Naive thymus-derived CD4-positive, alpha-beta T cell (primary cell): ENCODE measurements at regions of chr10 and their contacts with region 1.

Region 1: DNA sequence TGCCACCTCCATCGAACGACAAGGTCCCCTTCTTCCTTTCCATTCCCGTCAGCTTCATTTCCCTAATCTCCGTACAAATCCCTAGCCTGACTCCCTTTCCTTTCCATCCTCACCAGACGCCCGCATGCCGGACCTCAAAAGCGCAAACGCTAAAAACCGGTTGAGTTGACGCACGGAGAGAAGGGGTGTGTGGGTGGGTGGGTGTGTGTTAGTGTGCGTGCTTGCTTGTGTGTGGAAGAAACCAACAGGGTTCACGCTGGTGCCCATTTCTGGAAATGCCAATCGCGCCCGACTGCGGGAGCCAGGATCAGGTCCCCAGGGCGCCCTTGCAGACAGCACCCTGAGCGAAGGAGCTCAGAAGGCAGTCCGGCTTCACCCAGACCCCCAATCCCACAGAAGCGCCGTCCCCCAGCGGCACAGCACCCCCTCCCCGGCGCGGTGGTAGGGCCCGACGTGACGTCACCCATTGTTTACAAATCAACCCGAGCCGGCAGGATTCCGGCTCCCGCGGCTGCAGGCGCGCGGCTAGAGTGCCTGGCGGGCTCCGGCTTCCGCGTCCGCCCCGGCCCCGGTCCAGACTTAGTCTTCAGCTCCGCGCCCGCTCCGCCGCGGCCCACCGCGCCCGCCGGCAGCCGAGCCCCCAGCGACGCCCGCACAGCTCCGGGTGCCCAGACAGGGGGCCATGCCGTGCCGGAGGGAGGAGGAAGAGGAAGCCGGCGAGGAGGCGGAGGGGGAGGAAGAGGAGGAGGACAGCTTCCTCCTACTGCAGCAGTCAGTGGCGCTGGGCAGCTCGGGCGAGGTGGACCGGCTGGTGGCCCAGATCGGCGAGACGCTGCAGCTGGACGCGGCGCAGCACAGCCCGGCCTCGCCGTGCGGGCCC is at the start of gene FRAT1:
- DNase-seq: peak; percentile 87 to 99 (median 95)
- ATAC-seq: peak; percentile 87
- H3K4me3 ChIP-seq: peak within 1 kb of the TSS; percentile 92
- H3K4me3 Mint-ChIP-seq: peak within 1 kb of the TSS; percentile 92 to 99 (median 94)
- H3K27ac ChIP-seq: peak within 1 kb of the TSS; percentile 100
- H3K27ac Mint-ChIP-seq: peak within 1 kb of the TSS; percentile 99 to 100 (median 99)
- H3K4me1 ChIP-seq: peaks cover 12 to 18% of the 10 kb centered on the region in 2 donors
- H3K4me1 Mint-ChIP-seq: peaks cover 20 to 40% (median 29%) of the 10 kb centered on the region in 7 donors
- H3K27me3 ChIP-seq: no peaks in the 10 kb centered on the region
- H3K27me3 Mint-ChIP-seq: peaks cover 0 to 20% (median 0%) of the 10 kb centered on the region in 5 donors
- total RNA-seq, gene FRAT1: 5.3 to 41.0 (median 21.8) TPM

Region 2: GRCh38 chr10:96513698-96514561 is 805.1 kb before region 1 on chr10 and contains the start of gene TLL2:
- CTCF ChIA-PET with region 1: no interaction called
- POLR2A ChIA-PET with region 1: no interaction called
- intact Hi-C with region 1: no loop called
- DNase-seq: peak; percentile 1 to 74 (median 33)
- ATAC-seq: peak; percentile 83
- H3K4me3 ChIP-seq: peak within 1 kb of the TSS; percentile 48
- H3K4me3 Mint-ChIP-seq: peak within 1 kb of the TSS; percentile 75 to 86 (median 80)
- H3K27ac ChIP-seq: no peak within 1 kb of the TSS
- H3K27ac Mint-ChIP-seq: peak within 1 kb of the TSS in 1 of 9 donors; percentile 37
- H3K4me1 ChIP-seq: peaks cover 0 to 9% of the 10 kb centered on the region in 2 donors
- H3K4me1 Mint-ChIP-seq: peaks cover 8 to 24% (median 18%) of the 10 kb centered on the region in 7 donors
- H3K27me3 ChIP-seq: peaks cover 0 to 6% of the 10 kb centered on the region in 2 donors
- H3K27me3 Mint-ChIP-seq: peaks cover 29 to 61% (median 36%) of the 10 kb centered on the region in 5 donors
- total RNA-seq, gene TLL2: 0.24 TPM in 1 of 5 experiments, not detected in the others

Region 3: GRCh38 chr10:96740579-96741281 is 578.3 kb before region 1 on chr10:
- CTCF ChIA-PET with region 1: no interaction called
- POLR2A ChIA-PET with region 1: no interaction called
- intact Hi-C with region 1: no loop called
- DNase-seq: no peak
- ATAC-seq: peak; percentile 87
- H3K4me3 ChIP-seq: no peak overlapping the region
- H3K4me3 Mint-ChIP-seq: peak overlapping the region in 1 of 10 donors; percentile 29
- H3K27ac ChIP-seq: no peak overlapping the region
- H3K27ac Mint-ChIP-seq: no peak overlapping the region
- H3K4me1 ChIP-seq: no peaks in the 10 kb centered on the region
- H3K4me1 Mint-ChIP-seq: peaks cover 0 to 9% (median 0%) of the 10 kb centered on the region in 7 donors
- H3K27me3 ChIP-seq: no peaks in the 10 kb centered on the region
- H3K27me3 Mint-ChIP-seq: peaks cover 0 to 11% (median 0%) of the 10 kb centered on the region in 5 donors

Region 4: DNA sequence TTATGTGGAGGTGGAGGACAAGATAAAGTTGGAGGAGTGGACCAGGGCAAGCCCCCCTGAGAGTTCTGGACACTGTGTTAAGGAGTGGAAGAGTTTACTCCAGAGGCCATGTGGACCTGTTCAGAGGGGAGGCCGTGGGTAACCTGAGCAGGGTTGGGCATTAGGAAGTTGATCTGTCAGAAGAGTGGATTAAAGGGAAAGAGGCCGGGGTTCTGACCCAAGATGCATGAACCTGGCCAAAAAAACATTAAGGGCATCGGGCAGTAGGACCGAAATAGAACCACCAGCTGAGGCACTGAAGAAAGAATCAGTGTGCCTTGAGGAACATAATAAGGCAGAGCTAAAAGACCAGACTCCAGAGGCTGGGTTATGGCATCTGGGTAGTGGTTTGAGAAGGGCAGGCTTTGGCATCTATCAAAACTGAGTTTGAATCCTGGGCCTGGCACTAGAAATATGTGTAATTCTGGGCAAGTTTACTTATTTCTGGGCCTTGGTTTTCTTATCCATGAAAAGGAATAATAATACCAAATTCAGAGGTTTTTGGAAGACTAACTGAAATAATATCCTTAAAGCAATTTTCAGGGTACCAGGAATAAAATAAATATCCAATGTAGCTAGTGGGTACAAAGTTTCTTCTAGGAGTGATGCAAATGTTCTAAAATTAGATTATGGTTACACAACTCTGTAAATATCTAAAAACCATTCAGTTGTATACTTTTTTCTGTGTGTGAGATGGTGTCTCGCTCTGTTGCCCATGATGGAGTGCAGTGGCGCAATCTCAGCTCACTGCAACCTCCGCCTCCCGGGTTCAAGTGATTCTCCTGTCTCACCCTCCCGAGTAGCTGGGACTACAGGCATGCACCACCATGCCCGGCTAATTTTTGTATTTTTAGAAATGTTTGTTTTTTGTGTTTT is 10.9 kb before region 1 on chr10:
- CTCF ChIA-PET with region 1: no interaction called
- POLR2A ChIA-PET with region 1: interaction called, 12 read pairs
- intact Hi-C with region 1: no loop called
- DNase-seq: no peak
- ATAC-seq: no peak
- H3K4me3 ChIP-seq: no peak overlapping the region
- H3K4me3 Mint-ChIP-seq: no peak overlapping the region
- H3K27ac ChIP-seq: no peak overlapping the region
- H3K27ac Mint-ChIP-seq: peak overlapping the region in 1 of 9 donors; percentile 17
- H3K4me1 ChIP-seq: no peaks in the 10 kb centered on the region
- H3K4me1 Mint-ChIP-seq: no peaks in the 10 kb centered on the region
- H3K27me3 ChIP-seq: no peaks in the 10 kb centered on the region
- H3K27me3 Mint-ChIP-seq: no peaks in the 10 kb centered on the region

Region 5: GRCh38 chr10:97334370-97335175 is 15.6 kb after region 1 on chr10 and contains the start of gene FRAT2:
- CTCF ChIA-PET with region 1: interaction called, 31 read pairs
- POLR2A ChIA-PET with region 1: interaction called, 139 read pairs
- intact Hi-C with region 1: loop called (anchors 1 kb)
- DNase-seq: peak; percentile 85 to 96 (median 92)
- ATAC-seq: peak; percentile 94
- H3K4me3 ChIP-seq: peak within 1 kb of the TSS; percentile 78
- H3K4me3 Mint-ChIP-seq: peak within 1 kb of the TSS; percentile 88 to 98 (median 94)
- H3K27ac ChIP-seq: peak within 1 kb of the TSS; percentile 97
- H3K27ac Mint-ChIP-seq: peak within 1 kb of the TSS; percentile 89 to 97 (median 93)
- H3K4me1 ChIP-seq: peaks cover 20 to 24% of the 10 kb centered on the region in 2 donors
- H3K4me1 Mint-ChIP-seq: peaks cover 28 to 48% (median 42%) of the 10 kb centered on the region in 7 donors
- H3K27me3 ChIP-seq: no peaks in the 10 kb centered on the region
- H3K27me3 Mint-ChIP-seq: peaks cover 0 to 36% (median 0%) of the 10 kb centered on the region in 5 donors
- total RNA-seq, gene FRAT2: 9.3 to 39.7 (median 29.8) TPM